Activated CD8-positive, alpha-beta memory T cell treated with anti-CD3 and anti-CD28 coated beads, Interleukin-2, amount 10 ng/mL, durations not matched to agents 7 days and 5 days (primary cell): ENCODE measurements at regions of chr19 and their contacts with region 1.

Region 1: DNA sequence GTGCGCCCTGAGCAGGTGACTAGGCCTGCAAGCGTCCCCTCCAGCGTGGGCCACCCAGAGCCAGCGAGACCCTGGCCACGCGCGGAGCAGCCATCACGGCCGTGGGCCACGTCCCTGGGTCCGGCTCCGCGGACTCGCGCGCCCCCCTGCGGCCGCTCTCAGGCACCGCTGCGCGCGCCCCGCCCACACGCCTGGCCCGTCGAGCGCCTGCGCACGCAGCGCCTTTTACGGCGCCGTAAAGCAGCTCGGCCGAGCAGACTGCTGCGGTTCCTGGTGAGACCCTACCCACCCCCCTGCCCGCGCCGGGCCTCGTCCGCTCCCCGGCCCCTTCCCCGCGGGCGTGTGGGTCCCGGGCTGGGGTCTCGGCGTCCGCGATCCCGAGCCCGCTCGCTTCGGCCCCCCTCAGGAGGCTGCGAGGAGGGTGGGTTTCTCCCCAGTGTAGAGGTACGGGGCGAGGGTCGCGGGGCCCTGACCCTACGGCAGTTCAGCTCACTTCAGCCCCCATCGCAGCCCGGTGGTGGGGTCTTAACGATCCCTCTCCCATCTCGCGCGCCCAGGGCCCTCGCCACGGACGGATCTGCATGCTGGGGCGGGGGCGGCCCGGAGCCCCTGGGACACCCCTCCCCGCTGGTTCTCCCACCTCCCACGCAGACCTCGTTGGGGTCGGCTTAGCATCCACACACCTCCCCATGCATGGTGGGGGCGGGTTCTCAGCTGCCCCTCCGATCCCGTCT is at the start of gene TRAPPC5:
- DNase-seq: peak; percentile 88
- ATAC-seq: peak; percentile 81
- H3K4me3 Mint-ChIP-seq: peak within 1 kb of the TSS; percentile 83
- H3K27ac Mint-ChIP-seq: peak within 1 kb of the TSS; percentile 88
- H3K4me1 Mint-ChIP-seq: peaks cover 34% of the 10 kb centered on the region
- H3K27me3 Mint-ChIP-seq: peaks cover 22% of the 10 kb centered on the region
- total RNA-seq, gene TRAPPC5: 80.1 to 91.0 TPM

Region 2: GRCh38 chr19:7562646-7563393 is 118.0 kb before region 1 on chr19:
- CTCF ChIA-PET with region 1: interaction called, 59 read pairs
- DNase-seq: no peak
- ATAC-seq: no peak
- H3K4me3 Mint-ChIP-seq: no peak overlapping the region
- H3K27ac Mint-ChIP-seq: no peak overlapping the region
- H3K4me1 Mint-ChIP-seq: peaks cover 4% of the 10 kb centered on the region
- H3K27me3 Mint-ChIP-seq: no peaks in the 10 kb centered on the region

Region 3: DNA sequence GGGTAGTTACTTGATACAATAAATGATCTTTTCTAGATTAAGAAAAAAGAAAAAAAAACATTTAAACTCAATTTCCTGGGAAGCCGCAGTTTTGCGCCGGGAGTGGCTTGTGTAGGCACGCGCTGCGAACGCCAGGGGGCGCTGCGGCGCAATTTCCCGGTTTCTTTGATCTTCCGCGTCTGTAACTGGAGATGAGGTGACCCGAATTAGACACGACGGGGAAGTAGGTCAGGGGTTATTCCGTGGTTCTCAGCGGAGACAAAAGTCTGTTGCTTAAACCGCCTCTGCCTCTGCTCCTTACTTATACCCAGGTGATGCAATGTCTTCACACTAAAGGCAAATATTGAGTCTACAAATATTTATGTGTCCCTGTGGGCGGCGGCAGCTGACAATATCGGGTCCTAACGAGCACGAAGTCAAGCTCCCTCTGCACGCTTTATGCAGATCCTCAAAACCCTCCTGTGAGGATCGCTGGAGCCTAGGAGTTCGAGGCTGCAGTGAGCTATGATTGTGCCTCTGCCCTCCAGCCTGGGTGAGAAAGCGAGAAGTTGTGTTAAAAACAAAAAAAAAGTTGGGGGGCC is 28.6 kb before region 1 on chr19:
- CTCF ChIA-PET with region 1: interaction called, 38 read pairs
- DNase-seq: peak; percentile 88
- ATAC-seq: peak; percentile 93
- H3K4me3 Mint-ChIP-seq: peak overlapping the region; percentile 63
- H3K27ac Mint-ChIP-seq: peak overlapping the region; percentile 62
- H3K4me1 Mint-ChIP-seq: peaks cover 12% of the 10 kb centered on the region
- H3K27me3 Mint-ChIP-seq: peaks cover 2% of the 10 kb centered on the region

Region 4: DNA sequence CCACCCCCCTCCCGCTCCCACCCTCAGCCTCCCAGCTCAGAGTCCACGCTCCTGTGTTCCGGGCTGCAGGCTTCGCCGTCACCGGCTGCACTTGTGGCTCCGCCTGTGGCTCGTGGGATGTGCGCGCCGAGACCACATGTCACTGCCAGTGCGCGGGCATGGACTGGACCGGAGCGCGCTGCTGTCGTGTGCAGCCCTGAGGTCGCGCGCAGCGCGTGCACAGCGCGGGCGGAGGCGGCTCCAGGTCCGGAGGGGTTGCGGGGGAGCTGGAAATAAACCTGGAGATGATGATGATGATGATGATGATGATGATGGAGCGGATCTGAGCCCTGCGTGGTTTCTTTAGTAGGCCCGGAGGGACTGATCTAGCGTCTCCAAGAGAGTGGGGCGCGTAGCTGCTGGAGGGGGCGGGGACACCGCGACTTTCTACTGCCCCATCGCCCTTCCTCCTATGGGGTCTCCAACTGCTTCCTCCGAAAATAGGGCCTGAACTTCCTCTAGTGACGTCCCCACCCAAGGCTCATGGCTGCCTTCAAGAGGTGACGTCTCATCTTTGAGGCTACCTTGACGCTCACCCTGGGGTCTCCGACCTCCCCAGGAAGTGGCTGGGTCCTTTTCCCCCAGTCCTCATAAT is 10.5 kb before region 1 on chr19:
- CTCF ChIA-PET with region 1: interaction called, 23 read pairs
- DNase-seq: peak; percentile 57
- ATAC-seq: peak; percentile 60
- H3K4me3 Mint-ChIP-seq: peak overlapping the region; percentile 46
- H3K27ac Mint-ChIP-seq: no peak overlapping the region
- H3K4me1 Mint-ChIP-seq: peaks cover 18% of the 10 kb centered on the region
- H3K27me3 Mint-ChIP-seq: peaks cover 29% of the 10 kb centered on the region

Region 5: GRCh38 chr19:7722231-7722651 is 41.5 kb after region 1 on chr19:
- CTCF ChIA-PET with region 1: no interaction called
- DNase-seq: no peak
- ATAC-seq: no peak
- H3K4me3 Mint-ChIP-seq: no peak overlapping the region
- H3K27ac Mint-ChIP-seq: no peak overlapping the region
- H3K4me1 Mint-ChIP-seq: peaks cover 4% of the 10 kb centered on the region
- H3K27me3 Mint-ChIP-seq: peaks cover under 1% of the 10 kb centered on the region

Region 6: DNA sequence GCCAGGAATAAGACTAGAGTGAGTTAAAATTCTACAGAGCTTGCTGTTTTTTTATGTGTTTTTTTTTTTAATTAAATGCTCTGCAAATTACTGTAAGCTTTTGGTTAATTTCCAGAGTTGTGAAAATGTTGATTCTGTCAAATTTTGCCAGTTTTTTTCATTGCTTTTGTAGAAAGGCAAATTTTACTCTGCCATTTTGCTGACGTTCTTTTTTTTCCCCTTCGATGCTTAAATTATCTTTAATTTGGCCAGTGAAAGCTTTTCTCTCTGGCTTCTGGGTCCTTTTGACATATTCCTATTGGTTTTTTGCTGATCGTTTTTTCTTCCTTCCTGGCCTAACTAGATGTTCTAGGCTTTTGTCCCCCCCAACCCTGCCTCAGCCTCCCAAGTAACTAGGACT is 125.5 kb after region 1 on chr19:
- CTCF ChIA-PET with region 1: interaction called, 36 read pairs
- DNase-seq: no peak
- ATAC-seq: no peak
- H3K4me3 Mint-ChIP-seq: no peak overlapping the region
- H3K27ac Mint-ChIP-seq: no peak overlapping the region
- H3K4me1 Mint-ChIP-seq: peaks cover 12% of the 10 kb centered on the region
- H3K27me3 Mint-ChIP-seq: peaks cover 68% of the 10 kb centered on the region

Region 7: GRCh38 chr19:7845390-7846154 is 164.8 kb after region 1 on chr19:
- CTCF ChIA-PET with region 1: no interaction called
- DNase-seq: no peak
- ATAC-seq: no peak
- H3K4me3 Mint-ChIP-seq: no peak overlapping the region
- H3K27ac Mint-ChIP-seq: no peak overlapping the region
- H3K4me1 Mint-ChIP-seq: no peaks in the 10 kb centered on the region
- H3K27me3 Mint-ChIP-seq: no peaks in the 10 kb centered on the region